ENCODE measurements at regions of chr12 and their contacts with region 1.

Region 1: DNA sequence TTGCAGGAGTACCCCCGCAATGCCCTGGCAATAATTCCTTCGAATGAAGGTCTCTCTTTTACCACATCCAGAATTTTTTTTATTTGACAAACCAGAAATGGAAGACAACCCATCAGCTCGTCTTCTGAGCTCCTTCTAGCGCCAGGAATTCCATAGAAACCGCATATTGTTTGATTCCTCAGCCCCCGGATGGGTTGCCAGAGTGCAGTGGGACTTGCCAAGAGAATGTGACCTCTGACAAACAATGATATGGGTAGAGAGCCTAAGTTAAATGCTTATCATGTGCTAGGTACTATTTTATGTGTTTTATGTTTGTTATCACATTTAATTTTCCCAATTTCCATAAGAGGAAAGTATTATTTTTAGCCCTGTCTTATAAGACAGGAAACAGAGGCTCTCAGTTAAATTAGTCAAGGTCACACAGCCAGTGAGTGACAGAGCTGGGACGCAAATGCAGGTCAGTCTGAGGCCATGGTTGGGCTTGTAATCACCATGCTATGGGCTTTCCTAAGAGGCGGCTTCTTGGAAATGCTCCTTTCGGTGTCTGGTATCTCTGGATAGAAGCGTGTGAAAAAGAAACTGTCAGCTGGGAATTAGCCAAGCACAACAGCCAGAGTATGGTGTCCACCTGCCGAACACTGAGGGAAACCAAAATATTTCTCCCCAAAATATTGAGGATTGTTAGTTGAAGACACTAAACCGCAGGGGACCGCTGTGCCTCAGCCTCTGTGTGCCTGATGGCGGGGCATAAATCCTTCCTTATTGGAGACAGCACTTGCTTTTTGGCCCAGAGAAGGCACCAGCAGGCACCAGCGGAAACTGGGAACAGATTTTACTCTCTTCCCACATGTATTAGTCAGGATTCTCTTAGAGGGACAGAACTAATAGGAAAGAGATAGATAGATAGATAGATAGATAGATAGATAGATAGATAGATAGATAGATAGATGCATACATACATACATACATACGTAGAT is 29.4 kb upstream of the ETFBKMT start:
- DNase-seq: no peak
- H3K4me3 ChIP-seq: no peak overlapping the region
- H3K27ac ChIP-seq: no peak overlapping the region
- H3K4me1 ChIP-seq: no peaks in the 10 kb centered on the region
- H3K27me3 ChIP-seq: no peaks in the 10 kb centered on the region
- CTCF ChIP-seq: no peak

Region 2: GRCh38 chr12:30296486-30296885 is 1333.6 kb before region 1 on chr12:
- CTCF ChIA-PET with region 1: no interaction called
- POLR2A ChIA-PET with region 1: no interaction called
- intact Hi-C with region 1: no loop called
- DNase-seq: no peak
- H3K4me3 ChIP-seq: no peak overlapping the region
- H3K27ac ChIP-seq: no peak overlapping the region
- H3K4me1 ChIP-seq: no peaks in the 10 kb centered on the region
- H3K27me3 ChIP-seq: no peaks in the 10 kb centered on the region
- CTCF ChIP-seq: no peak

Region 3: DNA sequence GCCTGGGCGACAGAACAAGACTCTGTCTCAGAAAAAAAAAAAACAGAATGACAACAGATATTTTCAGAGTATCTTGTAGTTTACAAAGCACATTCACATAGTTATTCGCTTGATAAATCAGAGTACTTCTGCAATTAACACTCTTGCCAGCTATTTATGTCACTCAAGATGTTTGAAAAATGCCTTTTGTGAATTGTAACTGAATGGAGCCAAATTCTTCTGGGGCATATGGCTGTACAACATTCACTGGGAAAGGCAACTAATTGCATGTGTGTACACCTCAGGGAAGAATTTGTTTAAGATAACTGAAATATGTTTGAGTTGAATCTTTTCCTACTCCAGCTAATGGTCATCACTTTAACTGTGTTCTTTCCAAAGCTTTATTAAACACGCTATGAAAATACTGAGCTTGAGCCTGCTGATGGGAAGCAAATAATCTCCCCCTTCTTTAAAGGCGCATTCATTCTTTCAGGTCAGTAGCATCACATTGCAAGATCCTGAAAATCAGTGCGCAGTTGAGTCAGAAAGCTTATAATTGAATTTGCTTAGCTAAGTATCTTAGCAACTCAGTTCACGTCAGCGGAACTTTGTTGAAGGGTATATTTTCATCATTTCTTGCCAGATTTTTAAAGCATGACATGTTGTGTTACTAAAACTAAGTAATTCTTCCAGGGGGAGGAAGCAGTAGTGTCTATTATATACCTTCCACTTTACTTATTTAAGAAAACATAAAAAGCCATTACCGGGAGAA is 370.7 kb before region 1 on chr12:
- CTCF ChIA-PET with region 1: no interaction called
- POLR2A ChIA-PET with region 1: no interaction called
- intact Hi-C with region 1: loop called (anchors 5 kb)
- DNase-seq: no peak
- H3K4me3 ChIP-seq: no peak overlapping the region
- H3K27ac ChIP-seq: no peak overlapping the region
- H3K4me1 ChIP-seq: no peaks in the 10 kb centered on the region
- H3K27me3 ChIP-seq: no peaks in the 10 kb centered on the region
- CTCF ChIP-seq: no peak

Region 4: DNA sequence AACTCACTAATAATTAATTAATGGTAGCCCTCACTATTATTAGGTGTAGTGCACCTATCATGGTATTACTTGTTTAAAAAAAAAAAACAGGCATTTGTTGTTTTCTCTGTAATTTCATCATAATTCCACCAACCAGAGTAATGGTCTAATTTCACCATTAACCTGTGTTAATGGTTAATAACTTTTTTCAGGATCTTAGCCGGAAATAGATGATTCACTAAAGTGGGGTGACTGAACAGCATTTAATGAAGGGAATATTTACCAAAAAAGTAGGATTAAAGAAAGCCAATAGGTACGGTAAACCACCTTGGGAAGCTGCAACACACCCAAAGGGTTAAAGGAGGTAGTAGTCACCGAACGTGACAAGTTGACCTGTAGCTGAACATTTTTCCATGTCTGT is 42.5 kb after region 1 on chr12:
- CTCF ChIA-PET with region 1: no interaction called
- POLR2A ChIA-PET with region 1: no interaction called
- intact Hi-C with region 1: no loop called
- DNase-seq: no peak
- H3K4me3 ChIP-seq: no peak overlapping the region
- H3K27ac ChIP-seq: no peak overlapping the region
- H3K4me1 ChIP-seq: no peaks in the 10 kb centered on the region
- H3K27me3 ChIP-seq: no peaks in the 10 kb centered on the region
- CTCF ChIP-seq: no peak